Heart left ventricle (tissue), 16 donors: ENCODE measurements at regions of chr18 and their contacts with region 1.

Region 1: DNA sequence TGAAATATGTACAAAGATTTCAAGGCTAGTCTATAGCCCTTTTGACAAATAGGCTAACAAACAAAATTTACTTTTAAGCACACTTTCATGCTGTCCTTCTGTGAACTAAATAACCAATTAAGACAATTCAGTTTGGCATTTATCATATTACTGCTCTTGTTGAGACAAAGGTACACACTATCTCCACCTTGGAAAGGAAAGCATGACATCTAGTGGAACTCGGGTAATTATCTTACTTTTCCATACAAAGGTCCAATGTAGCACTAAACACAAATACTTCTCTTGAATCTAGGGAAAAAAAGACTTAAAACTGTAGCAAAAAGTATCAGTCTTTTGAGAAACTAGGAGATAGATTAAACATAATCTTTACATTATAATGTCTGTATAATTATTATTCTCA is 125.0 kb upstream of the CD226 start:
- DNase-seq: no peak
- ATAC-seq: peak in 2 of 4 donors; percentile 62 to 73
- H3K4me3 ChIP-seq: no peak overlapping the region
- H3K27ac ChIP-seq: no peak overlapping the region
- H3K4me1 ChIP-seq: no peaks in the 10 kb centered on the region
- H3K27me3 ChIP-seq: no peaks in the 10 kb centered on the region
- CTCF ChIP-seq: peak; percentile 21 to 59 (median 42)
- POLR2A ChIP-seq: no peak

Region 2: GRCh38 chr18:69636529-69637301 is 436.0 kb before region 1 on chr18:
- intact Hi-C with region 1: loop called in 5 of 10 experiments (anchors 5 to 10 kb)
- DNase-seq: no peak
- ATAC-seq: peak; percentile 68 to 84 (median 73)
- H3K4me3 ChIP-seq: no peak overlapping the region
- H3K27ac ChIP-seq: no peak overlapping the region
- H3K4me1 ChIP-seq: no peaks in the 10 kb centered on the region
- H3K27me3 ChIP-seq: no peaks in the 10 kb centered on the region
- CTCF ChIP-seq: peak in 11 of 12 donors; percentile 6 to 51 (median 36)
- POLR2A ChIP-seq: no peak

Region 3: GRCh38 chr18:69845593-69846506 is 226.8 kb before region 1 on chr18:
- intact Hi-C with region 1: loop called in 3 of 10 experiments (anchors 10 kb)
- DNase-seq: no peak
- ATAC-seq: peak in 2 of 4 donors; percentile 30 to 34
- H3K4me3 ChIP-seq: no peak overlapping the region
- H3K27ac ChIP-seq: no peak overlapping the region
- H3K4me1 ChIP-seq: peaks cover 0 to 16% (median 4%) of the 10 kb centered on the region in 12 donors
- H3K27me3 ChIP-seq: no peaks in the 10 kb centered on the region
- CTCF ChIP-seq: peak in 2 of 12 donors; percentile 5 to 8
- POLR2A ChIP-seq: no peak

Region 4: GRCh38 chr18:70015127-70015526 is 57.6 kb before region 1 on chr18:
- intact Hi-C with region 1: no loop called
- DNase-seq: peak in 3 of 5 donors; percentile 28 to 43 (median 39)
- ATAC-seq: peak; percentile 69 to 94 (median 88)
- H3K4me3 ChIP-seq: no peak overlapping the region
- H3K27ac ChIP-seq: peak overlapping the region in 8 of 12 donors; percentile 1 to 63 (median 38)
- H3K4me1 ChIP-seq: peaks cover 0 to 16% (median 6%) of the 10 kb centered on the region in 12 donors
- H3K27me3 ChIP-seq: no peaks in the 10 kb centered on the region
- CTCF ChIP-seq: no peak
- POLR2A ChIP-seq: no peak